Left ventricle myocardium inferior (tissue), 1 donor: ENCODE measurements at regions of chr5 and their contacts with region 1.

Region 1: DNA sequence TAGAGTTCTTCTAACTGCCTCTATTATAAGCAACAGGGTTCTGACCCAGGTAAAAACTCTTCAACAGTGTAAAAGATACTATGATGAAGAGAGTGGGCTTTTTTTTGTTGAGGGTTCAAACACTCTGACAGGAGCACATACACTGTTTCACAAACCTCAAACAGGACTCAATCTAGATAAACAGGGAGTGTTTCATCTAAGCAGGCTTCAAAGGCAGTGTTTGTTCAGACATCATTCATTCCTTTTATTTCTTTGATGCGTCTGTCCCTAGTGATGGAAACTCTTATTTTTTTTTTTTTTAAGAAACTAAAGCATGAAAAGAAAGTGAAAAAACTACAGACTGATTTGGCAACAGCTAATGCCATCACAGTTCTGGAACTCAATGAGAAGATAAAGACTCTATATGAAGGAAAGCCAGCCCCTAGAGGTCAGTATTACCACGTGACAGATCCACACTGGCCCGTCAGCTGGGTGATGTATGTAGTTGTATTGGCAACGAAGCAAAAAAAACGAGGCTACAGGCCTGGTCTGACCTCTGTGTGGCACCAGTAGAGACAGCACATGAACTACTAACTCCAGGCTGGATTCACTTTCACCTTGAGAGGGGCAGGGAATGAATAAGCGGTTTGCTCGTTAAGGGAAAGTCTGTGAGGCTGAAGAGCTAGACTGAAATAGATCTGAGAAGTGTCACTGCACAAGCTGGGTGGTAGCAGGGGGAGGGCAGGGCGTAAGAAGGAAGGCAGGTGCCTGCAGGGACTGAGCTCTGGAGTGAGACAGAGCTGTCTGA is 172.2 kb downstream of the CCDC192 start:
- DNase-seq: peak; percentile 49
- H3K4me3 ChIP-seq: peak overlapping the region; percentile 19
- H3K27ac ChIP-seq: peak overlapping the region; percentile 85
- H3K4me1 ChIP-seq: peaks cover 55% of the 10 kb centered on the region
- H3K27me3 ChIP-seq: no peaks in the 10 kb centered on the region
- CTCF ChIP-seq: peak; percentile 49

Region 2: GRCh38 chr5:127988146-127988760 is 112.8 kb after region 1 on chr5:
- intact Hi-C with region 1: no loop called
- DNase-seq: no peak
- H3K4me3 ChIP-seq: no peak overlapping the region
- H3K27ac ChIP-seq: peak overlapping the region; percentile 47
- H3K4me1 ChIP-seq: peaks cover 15% of the 10 kb centered on the region
- H3K27me3 ChIP-seq: no peaks in the 10 kb centered on the region
- CTCF ChIP-seq: no peak

Region 3: GRCh38 chr5:128093368-128093767 is 217.9 kb after region 1 on chr5:
- intact Hi-C with region 1: loop called (anchors 10 kb)
- DNase-seq: no peak
- H3K4me3 ChIP-seq: no peak overlapping the region
- H3K27ac ChIP-seq: no peak overlapping the region
- H3K4me1 ChIP-seq: peaks cover 37% of the 10 kb centered on the region
- H3K27me3 ChIP-seq: no peaks in the 10 kb centered on the region
- CTCF ChIP-seq: no peak